CD8-positive, alpha-beta memory T cell (primary cell): ENCODE measurements at regions of chr7 and their contacts with region 1.

Region 1: GRCh38 chr7:150716368-150716767 is at the start of gene GIMAP1:
- DNase-seq: peak; percentile 24 to 81 (median 71)
- H3K4me3 ChIP-seq: peak within 1 kb of the TSS; percentile 77
- H3K4me3 Mint-ChIP-seq: peak within 1 kb of the TSS; percentile 94 to 100 (median 100)
- H3K27ac ChIP-seq: peak within 1 kb of the TSS; percentile 79
- H3K27ac Mint-ChIP-seq: peak within 1 kb of the TSS; percentile 84 to 99 (median 98)
- H3K4me1 ChIP-seq: peaks cover 51% of the 10 kb centered on the region
- H3K4me1 Mint-ChIP-seq: peaks cover 60 to 80% (median 75%) of the 10 kb centered on the region in 3 donors
- H3K27me3 ChIP-seq: no peaks in the 10 kb centered on the region
- H3K27me3 Mint-ChIP-seq: no peaks in the 10 kb centered on the region
- total RNA-seq, gene GIMAP1: 9.8 to 10.0 TPM

Region 2: DNA sequence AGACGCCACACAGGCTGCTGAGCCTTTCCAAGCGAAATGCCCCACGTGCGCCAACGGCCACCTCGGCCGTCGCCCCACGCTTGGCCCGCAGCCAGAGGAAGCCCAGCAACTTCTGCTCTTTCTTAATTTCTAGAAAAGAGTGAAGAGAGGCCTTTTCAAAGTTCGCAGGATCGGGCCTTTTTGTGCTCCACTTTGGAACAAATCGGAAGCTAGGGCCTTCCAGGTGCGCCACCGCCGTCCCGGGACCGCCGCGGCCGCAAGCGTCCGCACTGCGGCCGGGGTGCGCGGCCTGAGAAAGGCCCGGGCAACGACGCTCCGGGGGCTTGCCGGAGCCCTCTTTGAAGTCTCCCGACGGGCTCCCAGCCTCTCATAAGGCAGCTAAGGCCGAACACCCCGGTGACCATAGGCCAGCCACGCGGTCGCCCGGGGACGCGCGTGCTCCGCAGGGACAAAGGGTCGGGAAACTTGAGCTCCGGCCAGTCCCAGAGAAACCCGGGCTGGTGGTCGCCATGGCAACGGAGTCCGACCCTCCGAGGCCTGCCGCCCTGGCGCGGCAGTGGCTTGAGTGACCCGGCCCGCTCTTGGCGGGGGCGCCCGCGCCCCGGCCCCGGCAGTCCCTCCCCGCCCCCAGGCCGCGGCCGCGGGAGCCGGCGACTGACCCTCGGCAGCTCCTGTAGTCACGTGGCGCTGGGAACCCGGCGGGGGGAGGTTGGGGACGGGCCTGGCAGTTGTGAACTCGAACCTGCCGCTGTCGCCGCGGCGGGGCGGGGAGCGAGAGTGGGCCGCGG is 348.1 kb before region 1 on chr7 and contains the start of gene REPIN1:
- CTCF ChIA-PET with region 1: no interaction called
- POLR2A ChIA-PET with region 1: no interaction called
- DNase-seq: peak; percentile 72 to 86 (median 77)
- H3K4me3 ChIP-seq: peak within 1 kb of the TSS; percentile 83
- H3K4me3 Mint-ChIP-seq: peak within 1 kb of the TSS; percentile 94 to 99 (median 95)
- H3K27ac ChIP-seq: peak within 1 kb of the TSS; percentile 94
- H3K27ac Mint-ChIP-seq: peak within 1 kb of the TSS; percentile 93 to 99 (median 94)
- H3K4me1 ChIP-seq: peaks cover 39% of the 10 kb centered on the region
- H3K4me1 Mint-ChIP-seq: peaks cover 27 to 42% (median 33%) of the 10 kb centered on the region in 3 donors
- H3K27me3 ChIP-seq: no peaks in the 10 kb centered on the region
- H3K27me3 Mint-ChIP-seq: peaks cover 0 to 2% of the 10 kb centered on the region in 2 donors
- total RNA-seq, gene REPIN1: 57.0 to 58.2 TPM

Region 3: DNA sequence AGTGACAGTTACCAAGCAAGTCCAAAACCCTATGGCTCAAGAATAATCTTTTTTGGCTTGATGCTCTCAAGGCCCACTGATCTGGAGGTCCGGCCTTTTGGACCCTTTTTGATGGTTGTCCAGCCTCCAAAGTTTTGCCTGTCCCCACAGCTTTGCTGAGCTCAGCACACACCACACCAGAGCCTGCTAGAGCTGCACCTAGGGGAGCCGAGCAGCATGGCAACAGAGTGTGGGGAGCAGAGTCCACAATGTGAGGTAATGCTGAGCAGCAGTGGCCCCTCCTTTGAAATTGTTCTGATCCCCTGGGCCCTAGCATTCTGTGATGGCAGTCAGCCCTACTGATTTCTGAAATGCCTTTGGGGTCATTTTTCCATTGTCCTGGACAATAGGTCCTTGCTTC is 192.3 kb before region 1 on chr7:
- CTCF ChIA-PET with region 1: no interaction called
- POLR2A ChIA-PET with region 1: no interaction called
- DNase-seq: no peak
- H3K4me3 ChIP-seq: no peak overlapping the region
- H3K4me3 Mint-ChIP-seq: peak overlapping the region in 6 of 7 donors; percentile 53 to 100 (median 94)
- H3K27ac ChIP-seq: no peak overlapping the region
- H3K27ac Mint-ChIP-seq: peak overlapping the region; percentile 54 to 97 (median 87)
- H3K4me1 ChIP-seq: peaks cover 30% of the 10 kb centered on the region
- H3K4me1 Mint-ChIP-seq: peaks cover 68 to 77% (median 71%) of the 10 kb centered on the region in 3 donors
- H3K27me3 ChIP-seq: no peaks in the 10 kb centered on the region
- H3K27me3 Mint-ChIP-seq: no peaks in the 10 kb centered on the region

Region 4: GRCh38 chr7:150567169-150567568 is 149.2 kb before region 1 on chr7 and contains the start of gene GIMAP4:
- CTCF ChIA-PET with region 1: interaction called, 28 read pairs
- POLR2A ChIA-PET with region 1: interaction called, 4 read pairs
- DNase-seq: peak in 2 of 5 donors; percentile 36 to 56
- H3K4me3 ChIP-seq: peak within 1 kb of the TSS; percentile 90
- H3K4me3 Mint-ChIP-seq: peak within 1 kb of the TSS; percentile 97 to 100 (median 100)
- H3K27ac ChIP-seq: peak within 1 kb of the TSS; percentile 67
- H3K27ac Mint-ChIP-seq: peak within 1 kb of the TSS; percentile 86 to 99 (median 98)
- H3K4me1 ChIP-seq: peaks cover 74% of the 10 kb centered on the region
- H3K4me1 Mint-ChIP-seq: peaks cover 72 to 86% (median 85%) of the 10 kb centered on the region in 3 donors
- H3K27me3 ChIP-seq: no peaks in the 10 kb centered on the region
- H3K27me3 Mint-ChIP-seq: peaks cover 0 to 4% of the 10 kb centered on the region in 2 donors
- total RNA-seq, gene GIMAP4: 57.3 to 59.3 TPM

Region 5: GRCh38 chr7:150685219-150686029 is 30.9 kb before region 1 on chr7 and contains the start of gene GIMAP2:
- CTCF ChIA-PET with region 1: interaction called, 14 read pairs
- POLR2A ChIA-PET with region 1: interaction called, 17 read pairs
- DNase-seq: peak in 3 of 5 donors; percentile 57 to 67 (median 59)
- H3K4me3 ChIP-seq: peak within 1 kb of the TSS; percentile 79
- H3K4me3 Mint-ChIP-seq: peak within 1 kb of the TSS; percentile 94 to 100 (median 97)
- H3K27ac ChIP-seq: peak within 1 kb of the TSS; percentile 60
- H3K27ac Mint-ChIP-seq: peak within 1 kb of the TSS; percentile 93 to 100 (median 97)
- H3K4me1 ChIP-seq: peaks cover 56% of the 10 kb centered on the region
- H3K4me1 Mint-ChIP-seq: peaks cover 76 to 93% (median 83%) of the 10 kb centered on the region in 3 donors
- H3K27me3 ChIP-seq: no peaks in the 10 kb centered on the region
- H3K27me3 Mint-ChIP-seq: no peaks in the 10 kb centered on the region
- total RNA-seq, gene GIMAP2: 40.4 to 42.9 TPM

Region 6: GRCh38 chr7:150695654-150696053 is 20.7 kb before region 1 on chr7:
- CTCF ChIA-PET with region 1: interaction called, 12 read pairs
- POLR2A ChIA-PET with region 1: interaction called, 6 read pairs
- DNase-seq: no peak
- H3K4me3 ChIP-seq: no peak overlapping the region
- H3K4me3 Mint-ChIP-seq: peak overlapping the region in 1 of 7 donors; percentile 9
- H3K27ac ChIP-seq: no peak overlapping the region
- H3K27ac Mint-ChIP-seq: peak overlapping the region in 1 of 8 donors; percentile 21
- H3K4me1 ChIP-seq: peaks cover under 1% of the 10 kb centered on the region
- H3K4me1 Mint-ChIP-seq: peaks cover 14 to 24% (median 20%) of the 10 kb centered on the region in 3 donors
- H3K27me3 ChIP-seq: no peaks in the 10 kb centered on the region
- H3K27me3 Mint-ChIP-seq: no peaks in the 10 kb centered on the region

Region 7: DNA sequence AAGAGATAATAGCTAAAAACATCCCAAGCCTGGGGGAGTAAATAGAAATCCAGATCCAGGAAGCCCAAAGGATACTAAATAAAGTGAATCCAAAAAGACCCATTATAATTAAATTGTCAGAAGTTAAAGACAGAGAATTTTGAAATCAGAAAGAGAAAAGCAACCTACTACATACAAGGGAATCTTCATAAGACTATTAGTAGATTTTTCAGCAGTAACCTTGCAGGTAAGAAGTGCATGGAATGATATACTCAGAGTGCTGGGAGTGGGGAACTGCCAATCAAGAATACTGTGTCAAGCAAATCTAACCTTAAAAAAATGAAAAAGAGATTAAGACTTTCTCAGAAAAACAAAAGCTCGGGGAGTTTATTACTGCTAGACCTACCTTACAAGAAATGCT is 13.2 kb before region 1 on chr7:
- CTCF ChIA-PET with region 1: interaction called, 13 read pairs
- POLR2A ChIA-PET with region 1: interaction called, 6 read pairs
- DNase-seq: no peak
- H3K4me3 ChIP-seq: no peak overlapping the region
- H3K4me3 Mint-ChIP-seq: no peak overlapping the region
- H3K27ac ChIP-seq: no peak overlapping the region
- H3K27ac Mint-ChIP-seq: peak overlapping the region in 1 of 8 donors; percentile 23
- H3K4me1 ChIP-seq: no peaks in the 10 kb centered on the region
- H3K4me1 Mint-ChIP-seq: peaks cover 8 to 20% (median 12%) of the 10 kb centered on the region in 3 donors
- H3K27me3 ChIP-seq: no peaks in the 10 kb centered on the region
- H3K27me3 Mint-ChIP-seq: no peaks in the 10 kb centered on the region

Region 8: GRCh38 chr7:151076611-151077444 is 360.5 kb after region 1 on chr7:
- CTCF ChIA-PET with region 1: no interaction called
- POLR2A ChIA-PET with region 1: no interaction called
- DNase-seq: no peak
- H3K4me3 ChIP-seq: no peak overlapping the region
- H3K4me3 Mint-ChIP-seq: no peak overlapping the region
- H3K27ac ChIP-seq: no peak overlapping the region
- H3K27ac Mint-ChIP-seq: no peak overlapping the region
- H3K4me1 ChIP-seq: peaks cover 24% of the 10 kb centered on the region
- H3K4me1 Mint-ChIP-seq: peaks cover 10 to 32% (median 17%) of the 10 kb centered on the region in 3 donors
- H3K27me3 ChIP-seq: no peaks in the 10 kb centered on the region
- H3K27me3 Mint-ChIP-seq: peaks cover 0 to 2% of the 10 kb centered on the region in 2 donors